CD8-positive, alpha-beta memory T cell (primary cell): ENCODE measurements at regions of chr21 and their contacts with region 1.

Region 1: DNA sequence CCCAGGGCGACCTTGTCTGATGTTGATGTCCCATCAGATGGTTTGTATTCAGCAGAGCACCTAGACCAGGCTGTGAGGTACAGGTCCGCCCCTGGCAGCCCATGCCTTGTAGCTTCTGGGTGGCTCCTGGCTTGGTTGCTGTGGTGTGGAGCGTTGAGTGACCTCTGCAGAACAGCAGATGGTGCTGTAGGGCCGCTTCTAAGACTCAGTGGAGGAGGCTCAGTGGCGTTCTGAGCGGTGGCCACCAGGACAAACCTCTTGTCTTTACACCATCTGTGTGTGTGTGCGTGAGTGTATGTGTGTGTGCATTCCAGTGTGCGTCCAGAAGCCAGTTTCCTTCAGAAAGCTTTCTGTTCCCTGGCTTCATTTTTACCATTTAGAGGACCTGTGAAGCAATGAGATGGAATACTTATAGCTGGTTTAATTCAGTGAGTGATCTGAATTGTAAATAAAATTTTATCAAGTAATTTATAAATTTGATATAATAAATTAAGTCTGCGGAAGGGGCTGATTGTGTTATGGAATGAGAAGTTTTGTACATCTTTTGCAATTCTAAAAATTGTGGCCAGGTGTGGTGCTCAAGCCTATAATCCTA is 66.1 kb downstream of the ADARB1 start:
- DNase-seq: peak; percentile 36 to 80 (median 44)
- H3K4me3 ChIP-seq: no peak overlapping the region
- H3K4me3 Mint-ChIP-seq: peak overlapping the region in 1 of 7 donors; percentile 2
- H3K27ac ChIP-seq: no peak overlapping the region
- H3K27ac Mint-ChIP-seq: peak overlapping the region in 2 of 8 donors; percentile 5 to 43
- H3K4me1 ChIP-seq: peaks cover 4% of the 10 kb centered on the region
- H3K4me1 Mint-ChIP-seq: peaks cover 8 to 19% (median 15%) of the 10 kb centered on the region in 3 donors
- H3K27me3 ChIP-seq: no peaks in the 10 kb centered on the region
- H3K27me3 Mint-ChIP-seq: peaks cover 0 to 1% of the 10 kb centered on the region in 2 donors

Region 2: GRCh38 chr21:44939532-44940115 is 200.8 kb before region 1 on chr21 and contains the start of gene SLX9:
- CTCF ChIA-PET with region 1: interaction called, 14 read pairs
- POLR2A ChIA-PET with region 1: no interaction called
- DNase-seq: peak; percentile 63 to 81 (median 71)
- H3K4me3 ChIP-seq: peak within 1 kb of the TSS; percentile 86
- H3K4me3 Mint-ChIP-seq: peak within 1 kb of the TSS; percentile 88 to 99 (median 89)
- H3K27ac ChIP-seq: peak within 1 kb of the TSS; percentile 70
- H3K27ac Mint-ChIP-seq: peak within 1 kb of the TSS; percentile 75 to 92 (median 84)
- H3K4me1 ChIP-seq: peaks cover 40% of the 10 kb centered on the region
- H3K4me1 Mint-ChIP-seq: peaks cover 34 to 46% (median 40%) of the 10 kb centered on the region in 3 donors
- H3K27me3 ChIP-seq: no peaks in the 10 kb centered on the region
- H3K27me3 Mint-ChIP-seq: peaks cover 0 to 1% of the 10 kb centered on the region in 2 donors
- total RNA-seq, gene SLX9: 68.1 to 71.1 TPM

Region 3: GRCh38 chr21:45081636-45082035 is 58.8 kb before region 1 on chr21:
- CTCF ChIA-PET with region 1: interaction called, 4 read pairs
- POLR2A ChIA-PET with region 1: interaction called, 14 read pairs
- DNase-seq: no peak
- H3K4me3 ChIP-seq: peak overlapping the region; percentile 1
- H3K4me3 Mint-ChIP-seq: peak overlapping the region in 6 of 7 donors; percentile 37 to 81 (median 55)
- H3K27ac ChIP-seq: no peak overlapping the region
- H3K27ac Mint-ChIP-seq: peak overlapping the region; percentile 58 to 97 (median 90)
- H3K4me1 ChIP-seq: peaks cover 99% of the 10 kb centered on the region
- H3K4me1 Mint-ChIP-seq: peaks cover 93 to 98% (median 95%) of the 10 kb centered on the region in 3 donors
- H3K27me3 ChIP-seq: no peaks in the 10 kb centered on the region
- H3K27me3 Mint-ChIP-seq: no peaks in the 10 kb centered on the region

Region 4: GRCh38 chr21:45152265-45152746 is 11.9 kb after region 1 on chr21:
- CTCF ChIA-PET with region 1: interaction called, 23 read pairs
- POLR2A ChIA-PET with region 1: interaction called, 5 read pairs
- DNase-seq: peak; percentile 34 to 83 (median 66)
- H3K4me3 ChIP-seq: no peak overlapping the region
- H3K4me3 Mint-ChIP-seq: peak overlapping the region in 6 of 7 donors; percentile 21 to 73 (median 71)
- H3K27ac ChIP-seq: no peak overlapping the region
- H3K27ac Mint-ChIP-seq: peak overlapping the region; percentile 16 to 93 (median 84)
- H3K4me1 ChIP-seq: peaks cover 40% of the 10 kb centered on the region
- H3K4me1 Mint-ChIP-seq: peaks cover 31 to 48% (median 40%) of the 10 kb centered on the region in 3 donors
- H3K27me3 ChIP-seq: no peaks in the 10 kb centered on the region
- H3K27me3 Mint-ChIP-seq: no peaks in the 10 kb centered on the region

Region 5: GRCh38 chr21:45306832-45307571 is 166.6 kb after region 1 on chr21:
- CTCF ChIA-PET with region 1: no interaction called
- POLR2A ChIA-PET with region 1: no interaction called
- DNase-seq: peak in 1 of 5 donors; percentile 36
- H3K4me3 ChIP-seq: no peak overlapping the region
- H3K4me3 Mint-ChIP-seq: no peak overlapping the region
- H3K27ac ChIP-seq: no peak overlapping the region
- H3K27ac Mint-ChIP-seq: no peak overlapping the region
- H3K4me1 ChIP-seq: peaks cover 11% of the 10 kb centered on the region
- H3K4me1 Mint-ChIP-seq: peaks cover 0 to 18% (median 5%) of the 10 kb centered on the region in 3 donors
- H3K27me3 ChIP-seq: no peaks in the 10 kb centered on the region
- H3K27me3 Mint-ChIP-seq: peaks cover 5 to 35% of the 10 kb centered on the region in 2 donors

Region 6: GRCh38 chr21:45439161-45439872 is 298.9 kb after region 1 on chr21:
- CTCF ChIA-PET with region 1: interaction called, 14 read pairs
- POLR2A ChIA-PET with region 1: no interaction called
- DNase-seq: peak; percentile 72 to 86 (median 76)
- H3K4me3 ChIP-seq: peak overlapping the region; percentile 34
- H3K4me3 Mint-ChIP-seq: peak overlapping the region in 5 of 7 donors; percentile 32 to 75 (median 68)
- H3K27ac ChIP-seq: peak overlapping the region; percentile 35
- H3K27ac Mint-ChIP-seq: peak overlapping the region in 4 of 8 donors; percentile 36 to 77 (median 68)
- H3K4me1 ChIP-seq: peaks cover 7% of the 10 kb centered on the region
- H3K4me1 Mint-ChIP-seq: peaks cover 4 to 8% (median 8%) of the 10 kb centered on the region in 3 donors
- H3K27me3 ChIP-seq: no peaks in the 10 kb centered on the region
- H3K27me3 Mint-ChIP-seq: peaks cover 10 to 12% of the 10 kb centered on the region in 2 donors